ENCODE measurements at regions of chr10 and their contacts with region 1.

Region 1: DNA sequence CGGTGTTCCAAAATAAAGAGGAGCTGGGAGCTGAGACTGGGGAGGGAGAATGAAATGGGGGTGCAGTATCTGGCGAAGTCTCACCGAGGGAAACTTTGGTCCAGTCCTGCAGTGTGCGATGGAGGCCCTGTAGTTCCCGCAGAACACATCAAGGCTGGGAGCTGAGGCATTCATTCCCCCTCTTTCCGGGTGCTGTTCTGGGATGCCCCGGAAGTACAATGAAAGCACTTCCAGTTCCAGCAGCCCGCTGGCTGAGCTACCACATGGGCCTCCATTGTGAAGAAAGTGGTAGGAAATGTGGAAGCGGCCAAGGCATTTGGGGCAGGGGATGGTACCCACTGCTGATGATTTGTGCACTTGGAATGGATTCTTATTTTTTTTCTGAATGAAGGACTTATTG is 560.7 kb downstream of the GLRX3 start:
- DNase-seq: no peak
- H3K4me3 ChIP-seq: no peak overlapping the region
- H3K27ac ChIP-seq: no peak overlapping the region
- H3K4me1 ChIP-seq: no peaks in the 10 kb centered on the region; a peak in 1 of 4 replicates
- H3K27me3 ChIP-seq: no peaks in the 10 kb centered on the region
- CTCF ChIP-seq: no peak
- EP300 ChIP-seq: no peak
- RAD21 ChIP-seq: no peak

Region 2: GRCh38 chr10:129707406-129708388 is 989.2 kb before region 1 on chr10:
- CTCF ChIA-PET with region 1: no interaction called
- POLR2A ChIA-PET with region 1: no interaction called
- DNase-seq: peak; percentile 58
- H3K4me3 ChIP-seq: no peak overlapping the region
- H3K27ac ChIP-seq: no peak overlapping the region
- H3K4me1 ChIP-seq: peaks cover 0 to 10% of the 10 kb centered on the region in 2 experiments; a peak in 1 of 4 replicates
- H3K27me3 ChIP-seq: no peaks in the 10 kb centered on the region
- CTCF ChIP-seq: no peak
- EP300 ChIP-seq: no peak
- RAD21 ChIP-seq: no peak

Region 3: GRCh38 chr10:130707389-130707979 is 10.6 kb after region 1 on chr10:
- CTCF ChIA-PET with region 1: interaction called, 10 read pairs
- POLR2A ChIA-PET with region 1: no interaction called
- DNase-seq: no peak
- H3K4me3 ChIP-seq: no peak overlapping the region
- H3K27ac ChIP-seq: no peak overlapping the region
- H3K4me1 ChIP-seq: no peaks in the 10 kb centered on the region
- H3K27me3 ChIP-seq: no peaks in the 10 kb centered on the region
- CTCF ChIP-seq: no peak
- EP300 ChIP-seq: no peak
- RAD21 ChIP-seq: no peak